ENCODE measurements at regions of chr1 and their contacts with region 1.

Region 1: DNA sequence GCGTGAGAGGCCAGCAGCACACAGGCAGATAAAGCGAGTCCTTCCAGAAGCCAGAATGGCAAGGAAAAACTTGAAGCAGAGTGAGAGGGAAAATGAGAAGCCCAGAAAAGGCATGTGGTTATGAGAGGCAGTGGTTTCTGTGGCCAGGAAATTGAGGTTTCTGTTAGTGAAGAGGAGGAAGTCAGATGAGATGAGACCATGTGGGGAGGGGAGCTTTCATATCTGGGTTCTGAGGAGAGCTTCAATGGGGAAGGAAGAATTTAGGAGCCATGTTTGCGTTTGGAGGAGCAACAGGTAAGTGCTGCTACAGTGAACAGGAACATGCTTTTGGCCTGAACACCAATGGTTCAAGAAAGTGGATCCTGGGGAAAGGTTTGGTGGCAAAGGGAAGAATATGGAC is 6.1 kb upstream of the CD1A start:
- DNase-seq: peak; percentile 68 to 86 (median 81)
- H3K4me3 ChIP-seq: peak overlapping the region in 1 of 3 experiments; percentile 62
- H3K4me3 Mint-ChIP-seq: peak overlapping the region; percentile 69 to 83
- H3K27ac ChIP-seq: peak overlapping the region; percentile 61 to 71
- H3K27ac Mint-ChIP-seq: peak overlapping the region; percentile 91 to 98 (median 95)
- H3K4me1 ChIP-seq: peaks cover 59 to 67% of the 10 kb centered on the region in 2 donors
- H3K4me1 Mint-ChIP-seq: peaks cover 67% of the 10 kb centered on the region
- H3K27me3 ChIP-seq: peaks cover 15 to 20% of the 10 kb centered on the region in 2 donors
- H3K27me3 Mint-ChIP-seq: peaks cover 13 to 30% (median 16%) of the 10 kb centered on the region in 3 donors
- CTCF ChIP-seq: no peak

Region 2: DNA sequence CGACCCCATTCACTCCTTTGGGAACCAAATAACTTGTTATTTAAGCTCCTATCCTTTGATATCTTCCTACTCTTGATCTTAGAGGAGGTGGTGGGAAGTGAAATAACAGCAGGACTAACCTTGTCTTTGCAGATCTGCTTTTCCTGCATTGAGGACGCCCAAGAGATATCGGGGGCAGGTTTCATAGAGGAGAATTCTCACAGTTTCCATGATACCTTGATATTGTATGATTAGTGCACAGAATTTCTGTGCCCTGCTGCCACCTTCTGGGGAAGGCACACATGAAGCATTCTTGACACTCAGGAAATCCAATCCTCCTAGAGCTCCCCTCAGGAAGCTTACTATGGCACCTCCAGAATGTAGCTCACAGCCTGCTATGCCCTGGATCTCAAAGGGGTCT is 81.6 kb after region 1 on chr1:
- intact Hi-C with region 1: loop called in 1 of 2 experiments (anchors 5 kb)
- DNase-seq: peak in 2 of 3 donors; percentile 30 to 39
- H3K4me3 ChIP-seq: no peak overlapping the region
- H3K4me3 Mint-ChIP-seq: no peak overlapping the region
- H3K27ac ChIP-seq: no peak overlapping the region
- H3K27ac Mint-ChIP-seq: peak overlapping the region in 1 of 7 donors; percentile 74
- H3K4me1 ChIP-seq: peaks cover 58 to 68% of the 10 kb centered on the region in 2 donors
- H3K4me1 Mint-ChIP-seq: peaks cover 23% of the 10 kb centered on the region
- H3K27me3 ChIP-seq: no peaks in the 10 kb centered on the region
- H3K27me3 Mint-ChIP-seq: peaks cover 0 to 4% (median 0%) of the 10 kb centered on the region in 3 donors
- CTCF ChIP-seq: peak; percentile 49

Measured in CD14-positive monocyte (primary cell).